ENCODE measurements at regions of chr5 and their contacts with region 1.

Region 1: DNA sequence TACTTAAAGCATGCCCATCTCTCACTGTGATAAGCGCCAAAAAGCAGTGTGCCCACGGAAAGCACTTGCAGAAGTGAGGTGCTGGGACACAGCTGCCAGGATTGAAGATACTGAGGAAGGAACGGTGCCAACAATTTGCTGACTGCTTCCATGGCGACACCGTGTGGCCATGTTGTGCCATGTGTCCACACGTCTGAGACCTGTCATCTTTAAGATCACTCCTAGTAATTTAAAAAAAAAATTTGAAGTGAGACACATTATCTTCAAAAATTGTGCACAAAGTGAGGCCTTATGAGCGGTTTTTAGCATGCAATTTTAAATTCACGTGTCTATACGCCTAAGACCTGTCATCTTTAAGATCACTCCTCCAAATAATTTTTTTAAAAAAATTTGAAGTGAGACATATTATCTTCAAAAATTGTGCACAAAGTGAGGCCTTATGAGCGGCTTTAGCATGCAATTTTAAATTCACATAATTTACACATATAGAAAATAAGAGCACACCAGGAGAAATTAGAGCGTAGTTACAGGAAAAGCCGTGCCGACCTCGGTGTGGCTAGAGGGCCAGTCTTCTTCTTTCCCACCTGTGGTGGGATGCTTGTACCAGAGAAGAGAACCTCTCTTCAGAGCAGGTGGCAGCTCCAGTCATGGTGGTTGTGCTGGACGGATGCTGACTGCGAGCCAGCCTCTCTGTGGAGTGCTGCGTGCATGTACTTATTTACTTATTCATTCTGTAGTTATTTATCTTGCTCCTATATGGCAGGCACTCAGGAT is 21.4 kb upstream of the FLT4 start:
- DNase-seq: peak; percentile 75
- H3K4me3 Mint-ChIP-seq: no peak overlapping the region
- H3K27ac Mint-ChIP-seq: no peak overlapping the region
- H3K4me1 Mint-ChIP-seq: peaks cover 8% of the 10 kb centered on the region
- H3K27me3 Mint-ChIP-seq: peaks cover 50% of the 10 kb centered on the region
- CTCF ChIP-seq: peak; percentile 80

Region 2: DNA sequence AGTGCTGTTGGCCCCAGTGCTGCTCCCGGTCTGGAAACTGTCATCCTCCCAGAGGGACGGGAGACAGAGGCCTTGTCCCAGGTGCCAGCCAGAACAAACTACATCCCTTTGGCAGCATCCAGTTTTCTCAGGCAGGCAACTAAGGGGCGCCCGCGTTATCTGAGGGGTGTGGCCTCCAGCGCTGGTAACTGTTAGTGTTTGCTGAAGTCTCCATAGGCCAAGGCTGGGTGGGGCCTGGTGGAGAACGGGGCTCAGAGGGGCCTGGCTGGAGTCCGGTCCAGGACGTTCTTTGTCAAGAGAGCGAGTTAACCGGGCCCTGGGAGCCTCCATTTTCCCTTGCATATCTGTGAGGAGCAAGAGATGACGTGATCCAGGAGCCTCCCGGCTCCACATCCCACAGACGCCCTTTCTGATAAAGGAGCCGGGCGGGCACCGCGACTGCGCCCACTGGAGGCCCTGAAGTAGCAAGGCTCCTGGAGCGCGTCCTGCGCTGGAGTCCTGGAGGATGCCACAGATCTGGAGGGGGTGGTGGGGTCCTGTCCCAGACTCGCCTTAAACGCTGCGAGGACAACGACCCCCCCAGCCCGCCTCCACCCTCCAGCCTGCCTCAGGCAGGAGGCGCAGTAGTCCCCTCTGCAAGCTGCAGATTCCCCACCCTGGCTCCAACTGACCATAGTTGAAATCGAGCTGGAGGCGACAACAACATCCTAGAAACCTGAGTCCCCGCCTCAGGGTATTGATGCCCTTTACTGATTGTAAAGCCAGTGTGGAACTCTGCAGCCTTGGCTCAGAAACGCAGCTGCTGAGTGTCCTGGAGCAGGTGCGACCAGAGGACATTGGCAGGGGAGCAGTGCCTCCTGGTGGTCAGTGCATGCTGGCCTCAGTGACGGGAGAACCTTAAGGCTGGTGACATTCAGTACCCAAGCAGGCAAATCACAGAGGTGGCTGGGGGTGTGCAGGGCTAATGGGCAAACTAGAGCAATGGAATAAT is 1831.8 kb before region 1 on chr5:
- CTCF ChIA-PET with region 1: no interaction called
- intact Hi-C with region 1: loop called (anchors 10 kb)
- DNase-seq: peak; percentile 27
- H3K4me3 Mint-ChIP-seq: no peak overlapping the region
- H3K27ac Mint-ChIP-seq: no peak overlapping the region
- H3K4me1 Mint-ChIP-seq: no peaks in the 10 kb centered on the region
- H3K27me3 Mint-ChIP-seq: no peaks in the 10 kb centered on the region
- CTCF ChIP-seq: no peak

Region 3: DNA sequence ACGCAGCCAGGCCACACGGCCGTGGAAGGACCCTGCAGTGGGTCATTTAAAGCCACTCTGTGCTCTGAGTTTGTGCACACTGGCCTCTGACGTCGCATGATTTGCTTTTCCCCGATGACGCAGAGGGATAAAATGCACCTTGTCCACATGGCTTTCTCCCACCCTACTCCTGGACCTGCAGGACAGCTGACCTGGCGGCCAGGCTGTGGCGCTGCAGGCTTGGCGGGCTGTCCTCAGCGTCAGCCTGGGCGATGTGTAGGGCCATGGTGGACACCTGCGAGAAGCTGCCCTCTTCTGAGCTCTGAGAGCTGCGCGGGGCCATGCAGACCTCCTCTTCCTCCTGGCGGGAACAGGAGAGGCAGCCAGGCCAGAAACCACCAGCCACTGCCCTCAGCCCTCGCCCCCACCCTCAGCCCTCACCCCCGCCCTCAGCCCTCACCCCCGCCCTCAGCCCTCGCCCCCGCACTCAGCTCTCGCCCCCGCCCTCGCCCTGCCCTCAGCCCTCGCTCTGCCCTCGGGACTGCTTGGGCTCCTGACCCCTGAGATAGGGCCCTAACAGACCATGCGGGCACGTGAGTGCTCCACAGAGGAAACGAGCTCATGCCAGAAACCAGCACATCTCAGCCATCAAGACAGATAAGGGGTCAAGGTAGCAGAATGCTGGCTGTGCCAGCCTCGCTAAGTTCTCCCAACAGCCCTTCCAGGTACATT is 59.5 kb before region 1 on chr5:
- CTCF ChIA-PET with region 1: interaction called, 20 read pairs
- intact Hi-C with region 1: loop called (anchors 1 kb)
- DNase-seq: peak; percentile 84
- H3K4me3 Mint-ChIP-seq: no peak overlapping the region
- H3K27ac Mint-ChIP-seq: no peak overlapping the region
- H3K4me1 Mint-ChIP-seq: peaks cover 2% of the 10 kb centered on the region
- H3K27me3 Mint-ChIP-seq: peaks cover 58% of the 10 kb centered on the region
- CTCF ChIP-seq: peak; percentile 62

Region 4: DNA sequence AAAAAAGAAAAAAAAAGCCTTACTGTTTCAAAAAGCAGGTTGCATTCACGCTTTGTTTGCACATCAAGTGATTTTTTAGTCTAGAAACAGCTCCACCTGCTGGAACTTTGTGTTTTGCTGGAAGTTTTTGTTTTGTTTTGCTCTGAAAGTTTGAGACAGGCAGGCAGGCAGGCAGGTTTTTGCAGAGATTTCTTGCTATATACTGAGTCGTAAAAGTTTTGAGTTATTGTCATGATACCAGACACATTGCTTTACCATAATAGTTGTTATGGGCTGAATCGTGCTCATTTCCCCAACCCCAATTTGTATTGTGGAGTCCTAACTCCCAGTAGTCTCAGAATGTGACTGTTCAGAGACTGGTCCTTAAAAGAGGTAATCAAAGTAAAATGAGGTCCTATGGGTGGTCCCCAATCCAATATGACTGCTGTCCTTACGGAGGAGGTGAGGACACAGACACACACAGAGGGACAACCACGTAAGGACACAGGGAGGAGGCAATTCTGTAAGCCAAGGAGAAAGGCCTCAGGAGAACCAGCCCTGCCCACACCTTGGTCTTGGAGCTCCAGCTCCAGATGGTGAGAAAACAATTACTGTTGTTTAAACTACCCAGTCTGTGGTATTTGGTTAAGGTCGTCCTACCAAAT is 48.2 kb after region 1 on chr5:
- CTCF ChIA-PET with region 1: no interaction called
- intact Hi-C with region 1: loop called (anchors 5 kb)
- DNase-seq: peak; percentile 56
- H3K4me3 Mint-ChIP-seq: no peak overlapping the region
- H3K27ac Mint-ChIP-seq: no peak overlapping the region
- H3K4me1 Mint-ChIP-seq: no peaks in the 10 kb centered on the region
- H3K27me3 Mint-ChIP-seq: peaks cover 70% of the 10 kb centered on the region
- CTCF ChIP-seq: peak; percentile 58

Measured in Calu3 (cell line).